CD14-positive monocyte (primary cell): ENCODE measurements at regions of chr11 and their contacts with region 1.

Region 1: DNA sequence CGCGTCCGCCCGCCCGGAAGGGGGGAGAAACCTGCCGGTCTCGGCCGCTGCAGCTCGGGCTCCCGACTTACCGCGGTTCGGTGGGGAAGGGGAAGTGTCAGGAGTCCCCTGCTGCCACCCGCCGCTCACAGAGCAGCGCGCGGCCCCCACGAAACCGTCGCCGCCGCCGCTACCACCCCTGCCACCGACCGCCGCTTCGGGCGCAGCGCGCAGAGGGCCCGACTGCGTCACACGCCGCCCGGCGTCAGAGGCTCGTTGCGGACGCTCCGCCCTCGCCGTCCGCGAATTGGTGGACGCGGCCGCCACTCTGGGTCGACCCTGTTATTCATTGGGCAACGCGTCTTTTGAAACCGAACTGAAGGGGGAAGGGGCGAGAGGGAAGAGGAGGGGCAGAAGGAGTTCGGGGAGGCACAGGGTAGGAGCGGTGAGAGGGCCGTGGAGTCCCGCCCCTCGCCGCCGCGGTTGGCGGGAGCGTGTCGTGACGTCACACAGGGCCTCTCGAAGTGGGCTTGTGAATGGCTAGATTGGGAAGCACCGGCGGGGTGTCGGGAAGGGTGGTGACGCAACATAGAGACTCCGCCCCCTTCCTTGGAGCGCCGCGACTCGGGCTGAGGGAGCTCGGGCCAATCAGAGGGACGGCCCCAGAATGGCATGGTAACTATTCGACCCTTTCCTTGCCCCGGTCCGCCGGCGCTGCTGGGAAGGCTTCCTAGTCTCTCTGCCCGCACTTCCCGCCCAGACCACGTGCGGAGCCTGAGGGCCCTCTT is at the start of gene NUP98:
- DNase-seq: peak; percentile 99 to 100 (median 100)
- H3K4me3 ChIP-seq: peak within 1 kb of the TSS; percentile 91 to 93 (median 91)
- H3K4me3 Mint-ChIP-seq: peak within 1 kb of the TSS; percentile 89 to 96
- H3K27ac ChIP-seq: peak within 1 kb of the TSS; percentile 87 to 99
- H3K27ac Mint-ChIP-seq: peak within 1 kb of the TSS; percentile 95 to 99 (median 99)
- H3K4me1 ChIP-seq: peaks cover 19 to 27% of the 10 kb centered on the region in 2 donors
- H3K4me1 Mint-ChIP-seq: peaks cover 25% of the 10 kb centered on the region
- H3K27me3 ChIP-seq: no peaks in the 10 kb centered on the region
- H3K27me3 Mint-ChIP-seq: peaks cover 0 to 1% (median 0%) of the 10 kb centered on the region in 3 donors
- CTCF ChIP-seq: no peak
- polyA plus RNA-seq, gene NUP98: 19.6 to 76.2 (median 28.5) TPM

Region 2: DNA sequence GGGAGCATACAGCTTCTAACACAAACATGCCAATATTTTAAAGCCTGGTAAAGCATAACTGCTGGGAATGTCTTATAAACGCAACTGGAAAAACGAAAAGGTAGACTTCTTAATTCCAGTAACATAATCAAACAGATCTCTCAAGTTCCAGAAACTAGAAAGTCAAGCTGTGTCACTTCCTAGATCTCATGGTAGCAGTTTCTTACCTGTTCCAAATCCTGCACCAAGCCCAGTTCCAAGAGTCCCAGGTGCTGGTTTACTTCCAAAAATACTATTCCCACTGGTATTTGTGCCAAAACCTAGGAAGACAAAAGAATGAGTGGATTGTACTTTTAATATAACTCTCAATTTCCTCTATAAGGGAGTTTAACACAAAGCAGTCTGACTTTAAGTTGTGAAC is 44.4 kb before region 1 on chr11:
- intact Hi-C with region 1: no loop called
- DNase-seq: no peak
- H3K4me3 ChIP-seq: no peak overlapping the region
- H3K4me3 Mint-ChIP-seq: no peak overlapping the region
- H3K27ac ChIP-seq: no peak overlapping the region
- H3K27ac Mint-ChIP-seq: no peak overlapping the region
- H3K4me1 ChIP-seq: no peaks in the 10 kb centered on the region
- H3K4me1 Mint-ChIP-seq: peaks cover under 1% of the 10 kb centered on the region
- H3K27me3 ChIP-seq: no peaks in the 10 kb centered on the region
- H3K27me3 Mint-ChIP-seq: peaks cover 0 to 1% (median 0%) of the 10 kb centered on the region in 3 donors
- CTCF ChIP-seq: no peak

Region 3: DNA sequence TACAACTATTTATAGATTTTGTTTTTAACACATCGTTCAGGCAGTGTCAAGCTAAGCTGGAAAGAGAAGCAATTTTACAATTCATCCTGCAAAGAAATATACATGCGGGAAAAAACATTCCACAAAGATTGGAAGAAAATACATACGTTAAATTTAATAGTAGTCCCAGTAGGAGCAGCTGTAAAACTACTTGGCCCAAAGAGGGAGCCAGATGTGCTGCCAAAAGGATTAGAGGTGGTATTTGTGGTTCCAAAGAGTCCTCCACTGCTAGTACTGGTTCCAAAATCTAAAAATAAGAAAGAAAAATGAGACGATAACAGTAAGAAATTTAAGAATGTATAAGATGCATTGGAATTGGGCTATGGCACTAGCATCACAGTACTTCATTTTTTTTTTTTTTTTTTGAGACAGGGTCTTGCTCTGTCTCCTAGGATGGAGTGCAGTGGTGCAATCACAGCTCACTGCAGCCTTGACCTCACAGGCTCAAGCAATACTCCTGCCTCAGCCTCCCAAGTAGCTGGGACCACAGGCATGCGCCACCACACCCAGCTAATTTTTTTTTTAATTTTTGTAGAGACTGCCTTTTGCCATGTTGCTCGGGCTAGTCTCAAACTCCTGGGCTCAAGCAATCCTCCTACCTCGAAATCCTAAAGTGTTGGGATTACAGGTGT is 21.6 kb before region 1 on chr11:
- intact Hi-C with region 1: no loop called
- DNase-seq: no peak
- H3K4me3 ChIP-seq: no peak overlapping the region
- H3K4me3 Mint-ChIP-seq: no peak overlapping the region
- H3K27ac ChIP-seq: no peak overlapping the region
- H3K27ac Mint-ChIP-seq: peak overlapping the region in 1 of 7 donors; percentile 4
- H3K4me1 ChIP-seq: peaks cover 2 to 3% of the 10 kb centered on the region in 2 donors
- H3K4me1 Mint-ChIP-seq: no peaks in the 10 kb centered on the region
- H3K27me3 ChIP-seq: no peaks in the 10 kb centered on the region
- H3K27me3 Mint-ChIP-seq: no peaks in the 10 kb centered on the region
- CTCF ChIP-seq: no peak

Region 4: GRCh38 chr11:3834664-3835461 is 37.4 kb after region 1 on chr11:
- intact Hi-C with region 1: loop called (anchors 1 to 5 kb)
- DNase-seq: peak; percentile 75 to 82 (median 80)
- H3K4me3 ChIP-seq: peak overlapping the region; percentile 29 to 100 (median 52)
- H3K4me3 Mint-ChIP-seq: peak overlapping the region; percentile 96 to 98
- H3K27ac ChIP-seq: peak overlapping the region; percentile 87 to 97
- H3K27ac Mint-ChIP-seq: peak overlapping the region; percentile 92 to 99 (median 95)
- H3K4me1 ChIP-seq: peaks cover 90 to 98% of the 10 kb centered on the region in 2 donors
- H3K4me1 Mint-ChIP-seq: peaks cover 97% of the 10 kb centered on the region
- H3K27me3 ChIP-seq: no peaks in the 10 kb centered on the region
- H3K27me3 Mint-ChIP-seq: no peaks in the 10 kb centered on the region
- CTCF ChIP-seq: no peak

Region 5: GRCh38 chr11:3841426-3842350 is 44.2 kb after region 1 on chr11:
- intact Hi-C with region 1: loop called (anchors 1 to 5 kb)
- DNase-seq: peak; percentile 87 to 98 (median 95)
- H3K4me3 ChIP-seq: peak overlapping the region; percentile 36 to 100 (median 47)
- H3K4me3 Mint-ChIP-seq: peak overlapping the region; percentile 84 to 96
- H3K27ac ChIP-seq: peak overlapping the region; percentile 89 to 97
- H3K27ac Mint-ChIP-seq: peak overlapping the region; percentile 93 to 98 (median 96)
- H3K4me1 ChIP-seq: peaks cover 30 to 38% of the 10 kb centered on the region in 2 donors
- H3K4me1 Mint-ChIP-seq: peaks cover 39% of the 10 kb centered on the region
- H3K27me3 ChIP-seq: no peaks in the 10 kb centered on the region
- H3K27me3 Mint-ChIP-seq: peaks cover 0 to 2% (median 2%) of the 10 kb centered on the region in 3 donors
- CTCF ChIP-seq: peak; percentile 88